Activated CD8-positive, alpha-beta T cell treated with anti-CD3 and anti-CD28 coated beads, Interleukin-2, amount 10 ng/mL, durations not matched to agents 7 days and 5 days (primary cell): ENCODE measurements at regions of chr12 and their contacts with region 1.

Region 1: DNA sequence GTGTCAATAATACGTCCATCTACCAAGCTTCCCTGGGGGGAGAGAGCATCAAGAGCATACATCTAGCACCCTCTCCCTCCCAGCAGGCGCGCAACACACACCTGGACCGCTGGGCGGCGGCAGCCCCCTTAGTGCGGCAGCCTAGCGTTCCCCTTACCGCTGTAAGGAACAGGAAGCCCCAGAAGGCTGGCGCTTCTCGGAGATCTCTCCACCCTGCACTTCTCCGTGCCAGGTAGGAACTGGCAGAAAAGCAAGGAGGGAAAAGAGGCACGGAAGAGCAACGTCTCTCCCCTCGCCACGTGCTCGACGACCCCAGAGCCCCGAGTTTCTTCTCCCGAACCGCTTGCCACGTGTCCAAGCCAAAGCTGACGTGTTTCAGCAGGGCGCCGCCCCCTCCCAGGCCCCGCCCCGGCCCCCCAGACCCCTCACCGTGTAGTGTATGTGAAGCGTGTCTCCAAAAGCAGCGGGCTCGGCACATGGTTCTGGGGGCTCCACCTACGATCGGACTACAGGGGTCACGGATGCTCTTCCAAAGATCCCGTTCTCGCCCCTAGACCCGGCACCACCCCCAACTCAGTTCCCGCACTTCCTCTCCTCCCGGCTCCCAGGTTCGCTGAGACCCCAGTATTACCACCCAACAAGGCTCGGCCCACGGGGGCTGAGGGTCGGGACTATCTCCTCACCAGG is 532 bp downstream of the FKBP11 start:
- DNase-seq: peak; percentile 85
- ATAC-seq: peak; percentile 87
- H3K4me3 Mint-ChIP-seq: peak overlapping the region; percentile 93
- H3K27ac Mint-ChIP-seq: peak overlapping the region; percentile 95
- H3K4me1 Mint-ChIP-seq: peaks cover 21% of the 10 kb centered on the region
- H3K27me3 Mint-ChIP-seq: no peaks in the 10 kb centered on the region

Region 2: GRCh38 chr12:48832321-48833060 is 92.3 kb before region 1 on chr12:
- CTCF ChIA-PET with region 1: no interaction called
- POLR2A ChIA-PET with region 1: no interaction called
- DNase-seq: no peak
- ATAC-seq: no peak
- H3K4me3 Mint-ChIP-seq: no peak overlapping the region
- H3K27ac Mint-ChIP-seq: no peak overlapping the region
- H3K4me1 Mint-ChIP-seq: no peaks in the 10 kb centered on the region
- H3K27me3 Mint-ChIP-seq: no peaks in the 10 kb centered on the region

Region 3: GRCh38 chr12:48936379-48936979 is 11.7 kb after region 1 on chr12:
- CTCF ChIA-PET with region 1: interaction called, 77 read pairs
- POLR2A ChIA-PET with region 1: interaction called, 5 read pairs
- DNase-seq: peak; percentile 88
- ATAC-seq: peak; percentile 60
- H3K4me3 Mint-ChIP-seq: no peak overlapping the region
- H3K27ac Mint-ChIP-seq: no peak overlapping the region
- H3K4me1 Mint-ChIP-seq: peaks cover 26% of the 10 kb centered on the region
- H3K27me3 Mint-ChIP-seq: no peaks in the 10 kb centered on the region

Region 4: GRCh38 chr12:48957141-48958048 is 32.6 kb after region 1 on chr12 and contains the start of gene ARF3:
- CTCF ChIA-PET with region 1: interaction called, 15 read pairs
- POLR2A ChIA-PET with region 1: interaction called, 5 read pairs
- DNase-seq: peak; percentile 95
- ATAC-seq: peak; percentile 96
- H3K4me3 Mint-ChIP-seq: peak within 1 kb of the TSS; percentile 94
- H3K27ac Mint-ChIP-seq: peak within 1 kb of the TSS; percentile 85
- H3K4me1 Mint-ChIP-seq: peaks cover 33% of the 10 kb centered on the region
- H3K27me3 Mint-ChIP-seq: peaks cover 14% of the 10 kb centered on the region
- total RNA-seq, gene ARF3: 104 to 108 TPM